Activated CD4-positive, alpha-beta T cell treated with anti-CD3 and anti-CD28 coated beads, Interleukin-2, amount 10 ng/mL, durations not matched to agents 24 days and 14 days (primary cell): ENCODE measurements at regions of chr16 and their contacts with region 1.

Region 1: DNA sequence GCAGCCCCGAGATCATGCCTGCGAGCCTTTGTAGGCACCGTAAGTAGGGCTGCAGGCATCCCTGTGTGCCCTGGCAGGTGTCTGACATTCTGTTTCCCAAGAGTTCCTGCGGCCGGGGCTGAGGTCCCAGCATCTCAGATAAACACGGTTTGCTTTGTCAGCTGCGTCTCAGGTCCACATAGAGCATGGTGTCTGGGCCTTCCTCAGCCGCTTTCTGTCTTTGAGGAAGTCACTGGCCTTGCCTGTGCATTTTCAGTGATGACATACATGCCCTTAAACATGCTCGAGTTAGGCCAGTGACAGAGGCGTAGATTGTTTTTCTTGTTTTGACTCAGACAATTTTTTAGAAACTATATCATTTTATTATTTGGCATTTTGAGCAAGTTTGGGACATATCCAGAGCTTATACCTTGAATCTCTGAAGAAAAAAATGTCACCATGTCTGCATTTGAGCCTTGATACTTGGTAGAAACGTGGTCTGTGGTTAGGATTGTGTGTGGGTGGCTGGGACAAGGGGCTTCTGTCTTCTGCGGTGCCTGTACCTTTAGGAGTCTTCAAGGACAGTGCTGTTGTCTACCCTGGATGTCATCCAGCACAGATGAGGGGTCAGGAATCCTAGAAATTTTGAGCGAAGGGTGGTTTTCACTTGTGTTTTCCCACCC is 105.8 kb downstream of the SNX29 start:
- DNase-seq: peak; percentile 65
- H3K4me3 Mint-ChIP-seq: peak overlapping the region; percentile 11
- H3K27ac Mint-ChIP-seq: peak overlapping the region; percentile 83
- H3K4me1 Mint-ChIP-seq: peaks cover 44% of the 10 kb centered on the region
- H3K27me3 Mint-ChIP-seq: no peaks in the 10 kb centered on the region

Region 2: GRCh38 chr16:10944249-10945064 is 1137.9 kb before region 1 on chr16 and contains the start of gene CLEC16A:
- intact Hi-C with region 1: loop called (anchors 5 kb)
- DNase-seq: peak; percentile 99
- H3K4me3 Mint-ChIP-seq: peak within 1 kb of the TSS; percentile 84
- H3K27ac Mint-ChIP-seq: peak within 1 kb of the TSS; percentile 79
- H3K4me1 Mint-ChIP-seq: peaks cover 56% of the 10 kb centered on the region
- H3K27me3 Mint-ChIP-seq: no peaks in the 10 kb centered on the region
- total RNA-seq, gene CLEC16A: 35.9 and 36.2 TPM in 2 replicates

Region 3: DNA sequence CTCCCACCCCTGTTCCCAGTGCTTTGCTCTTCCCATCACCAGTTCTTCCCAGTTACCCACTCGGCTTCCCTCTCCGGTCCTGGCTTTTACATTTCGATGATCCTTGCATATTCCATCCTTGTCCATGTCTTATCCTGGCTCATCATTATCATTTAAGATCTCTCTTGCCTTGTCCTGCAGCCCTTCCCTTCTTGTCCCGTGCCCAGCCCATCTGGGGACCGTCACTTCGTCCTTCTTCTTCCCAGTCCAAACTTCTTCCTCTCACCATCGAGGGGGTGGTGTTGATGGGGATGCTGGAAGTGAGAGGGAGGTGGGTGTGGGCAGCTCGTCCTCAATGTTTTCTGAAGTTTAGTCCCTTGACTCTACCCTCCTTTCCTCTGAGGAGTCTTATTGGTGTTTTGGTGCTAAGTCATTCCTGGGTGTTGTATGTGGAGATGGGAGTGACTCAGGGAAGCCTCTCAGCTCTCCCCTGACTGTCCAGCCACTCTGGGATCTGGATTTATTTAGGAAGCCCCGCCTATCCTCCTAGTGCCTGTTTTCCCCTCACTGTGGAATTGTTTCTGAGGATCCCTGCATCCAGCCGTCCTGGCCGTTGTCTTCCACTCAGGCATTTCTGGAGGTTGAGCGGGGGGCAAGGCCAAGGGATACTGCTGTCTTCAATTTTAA is 104.8 kb before region 1 on chr16:
- intact Hi-C with region 1: loop called (anchors 5 kb)
- DNase-seq: peak; percentile 56
- H3K4me3 Mint-ChIP-seq: peak overlapping the region; percentile 98
- H3K27ac Mint-ChIP-seq: peak overlapping the region; percentile 57
- H3K4me1 Mint-ChIP-seq: peaks cover 30% of the 10 kb centered on the region
- H3K27me3 Mint-ChIP-seq: no peaks in the 10 kb centered on the region

Region 4: GRCh38 chr16:12157517-12158093 is 75.2 kb after region 1 on chr16:
- intact Hi-C with region 1: no loop called
- DNase-seq: no peak
- H3K4me3 Mint-ChIP-seq: no peak overlapping the region
- H3K27ac Mint-ChIP-seq: no peak overlapping the region
- H3K4me1 Mint-ChIP-seq: peaks cover 2% of the 10 kb centered on the region
- H3K27me3 Mint-ChIP-seq: no peaks in the 10 kb centered on the region

Region 5: DNA sequence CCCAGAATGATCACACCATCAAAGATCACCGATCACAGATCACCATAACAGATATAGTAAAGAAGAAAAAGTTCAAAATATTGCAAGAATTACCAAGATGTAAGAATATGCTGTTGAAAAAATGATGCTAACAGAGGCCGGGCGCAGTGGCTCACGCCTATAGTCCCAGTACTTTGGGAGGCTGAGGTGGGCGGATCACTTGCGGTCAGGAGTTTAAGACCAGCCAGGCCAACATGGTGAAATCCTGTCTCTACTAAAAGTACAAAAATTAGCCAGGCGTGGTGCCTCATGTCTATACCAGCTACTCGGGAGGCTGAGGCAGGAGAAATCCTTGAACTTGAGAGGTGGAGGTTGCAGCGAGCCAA is 668.2 kb after region 1 on chr16:
- intact Hi-C with region 1: loop called (anchors 2 kb)
- DNase-seq: peak; percentile 56
- H3K4me3 Mint-ChIP-seq: peak overlapping the region; percentile 50
- H3K27ac Mint-ChIP-seq: peak overlapping the region; percentile 87
- H3K4me1 Mint-ChIP-seq: peaks cover 26% of the 10 kb centered on the region
- H3K27me3 Mint-ChIP-seq: no peaks in the 10 kb centered on the region

Region 6: DNA sequence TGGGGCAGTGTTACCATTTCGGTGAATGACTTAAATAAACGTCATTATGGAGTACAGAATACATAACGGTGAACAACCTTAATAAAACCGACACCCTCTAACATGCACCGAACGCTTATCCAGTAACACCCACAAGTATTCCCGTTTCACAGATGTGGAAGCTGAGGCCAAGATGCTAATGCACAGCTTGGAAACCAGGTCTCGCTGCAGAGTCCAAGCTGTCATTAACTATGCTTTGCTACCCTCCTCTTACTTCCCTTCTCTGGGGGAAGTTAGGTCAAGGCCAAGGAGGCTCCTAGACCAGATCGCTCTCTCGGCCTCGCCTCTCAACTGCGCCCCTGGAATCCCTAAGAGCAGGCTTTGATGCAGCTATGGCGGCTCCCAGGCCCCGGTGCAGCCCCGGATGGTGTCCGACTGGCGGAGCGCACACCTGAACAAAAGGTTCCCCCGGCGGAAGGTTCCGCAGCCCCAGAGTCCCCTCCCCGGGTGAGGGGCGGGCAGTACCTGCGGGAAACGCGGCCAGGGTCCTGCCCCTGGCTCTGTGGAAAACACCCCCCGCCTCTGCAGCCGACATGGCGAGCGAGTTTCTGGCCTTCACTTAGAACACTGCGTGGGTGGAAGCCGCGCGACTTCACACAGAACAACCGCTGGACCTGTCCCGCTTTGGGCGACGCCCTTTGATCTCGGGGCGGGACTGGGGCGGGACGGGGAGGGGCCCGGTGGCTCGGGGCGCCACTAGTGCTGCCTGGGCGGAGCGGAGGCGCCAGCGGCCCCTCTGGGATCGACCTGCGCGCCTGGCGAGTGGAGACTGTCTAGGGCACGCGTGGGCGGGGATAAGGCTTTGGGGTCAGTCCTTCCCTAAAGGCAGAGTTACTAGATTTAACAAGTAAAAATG is 721.1 kb after region 1 on chr16 and contains the start of gene CPPED1:
- intact Hi-C with region 1: loop called (anchors 5 kb)
- DNase-seq: peak; percentile 97
- H3K4me3 Mint-ChIP-seq: peak within 1 kb of the TSS; percentile 94
- H3K27ac Mint-ChIP-seq: peak within 1 kb of the TSS; percentile 94
- H3K4me1 Mint-ChIP-seq: peaks cover 33% of the 10 kb centered on the region
- H3K27me3 Mint-ChIP-seq: no peaks in the 10 kb centered on the region
- total RNA-seq, gene CPPED1: 4.4 and 5.1 TPM in 2 replicates